AG04450 (cell line): ENCODE measurements at regions of chr3 and their contacts with region 1.

Region 1: GRCh38 chr3:149879872-149880271 is 66.9 kb downstream of the RNF13 start:
- DNase-seq: peak; percentile 16
- H3K4me3 ChIP-seq: no peak overlapping the region
- H3K27ac ChIP-seq: no peak overlapping the region
- H3K27me3 ChIP-seq: no peaks in the 10 kb centered on the region
- CTCF ChIP-seq: peak; percentile 76

Region 2: GRCh38 chr3:149717391-149718056 is 162.3 kb before region 1 on chr3:
- CTCF ChIA-PET with region 1: no interaction called
- POLR2A ChIA-PET with region 1: no interaction called
- DNase-seq: peak; percentile 45
- H3K4me3 ChIP-seq: no peak overlapping the region
- H3K27ac ChIP-seq: no peak overlapping the region
- H3K27me3 ChIP-seq: no peaks in the 10 kb centered on the region
- CTCF ChIP-seq: peak; percentile 80

Region 3: GRCh38 chr3:149850787-149851584 is 28.9 kb before region 1 on chr3:
- CTCF ChIA-PET with region 1: interaction called, 16 read pairs
- POLR2A ChIA-PET with region 1: no interaction called
- DNase-seq: no peak
- H3K4me3 ChIP-seq: no peak overlapping the region
- H3K27ac ChIP-seq: no peak overlapping the region
- H3K27me3 ChIP-seq: no peaks in the 10 kb centered on the region
- CTCF ChIP-seq: no peak

Region 4: GRCh38 chr3:149902498-149903139 is 22.7 kb after region 1 on chr3:
- CTCF ChIA-PET with region 1: interaction called, 95 read pairs
- POLR2A ChIA-PET with region 1: no interaction called
- DNase-seq: no peak
- H3K4me3 ChIP-seq: no peak overlapping the region
- H3K27ac ChIP-seq: no peak overlapping the region
- H3K27me3 ChIP-seq: no peaks in the 10 kb centered on the region
- CTCF ChIP-seq: peak; percentile 36

Region 5: GRCh38 chr3:149969940-149970715 is 90.3 kb after region 1 on chr3:
- CTCF ChIA-PET with region 1: interaction called, 10 read pairs
- POLR2A ChIA-PET with region 1: no interaction called
- DNase-seq: peak; percentile 72
- H3K4me3 ChIP-seq: peak overlapping the region; percentile 78
- H3K27ac ChIP-seq: peak overlapping the region; percentile 80
- H3K27me3 ChIP-seq: no peaks in the 10 kb centered on the region
- CTCF ChIP-seq: no peak

Region 6: DNA sequence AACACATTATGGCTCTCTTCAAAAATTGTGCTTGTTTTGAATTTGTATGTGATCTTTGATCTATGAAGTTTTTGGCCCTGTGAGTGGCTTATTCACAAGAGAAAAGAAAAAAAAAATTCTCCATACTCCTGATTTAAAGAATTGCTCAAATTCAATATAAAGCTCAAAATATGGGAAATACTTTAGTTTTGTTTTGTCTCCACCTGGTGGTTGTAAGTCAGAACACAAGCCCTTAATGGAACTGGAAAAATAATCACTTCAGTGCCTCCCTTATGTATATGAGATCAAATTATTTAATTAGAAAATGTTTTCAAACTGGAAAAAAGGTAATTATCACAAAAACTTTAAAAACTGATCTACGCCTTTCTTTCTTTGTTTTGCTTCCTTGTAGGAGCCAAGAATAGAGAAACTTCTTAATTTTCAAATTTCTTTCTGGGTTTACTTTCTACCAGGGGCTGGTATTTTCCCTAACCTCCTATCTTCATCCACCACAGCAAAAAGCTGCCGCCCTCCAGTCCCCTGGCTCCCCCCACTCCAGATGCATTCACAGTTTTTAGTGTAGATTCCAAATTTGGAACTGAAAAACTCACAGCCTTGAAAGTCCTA is 615.8 kb after region 1 on chr3:
- CTCF ChIA-PET with region 1: interaction called, 11 read pairs
- POLR2A ChIA-PET with region 1: no interaction called
- DNase-seq: peak; percentile 16
- H3K4me3 ChIP-seq: no peak overlapping the region
- H3K27ac ChIP-seq: no peak overlapping the region
- H3K27me3 ChIP-seq: no peaks in the 10 kb centered on the region
- CTCF ChIP-seq: peak; percentile 61